Natural killer cell (primary cell): ENCODE measurements at regions of chr2 and their contacts with region 1.

Region 1: DNA sequence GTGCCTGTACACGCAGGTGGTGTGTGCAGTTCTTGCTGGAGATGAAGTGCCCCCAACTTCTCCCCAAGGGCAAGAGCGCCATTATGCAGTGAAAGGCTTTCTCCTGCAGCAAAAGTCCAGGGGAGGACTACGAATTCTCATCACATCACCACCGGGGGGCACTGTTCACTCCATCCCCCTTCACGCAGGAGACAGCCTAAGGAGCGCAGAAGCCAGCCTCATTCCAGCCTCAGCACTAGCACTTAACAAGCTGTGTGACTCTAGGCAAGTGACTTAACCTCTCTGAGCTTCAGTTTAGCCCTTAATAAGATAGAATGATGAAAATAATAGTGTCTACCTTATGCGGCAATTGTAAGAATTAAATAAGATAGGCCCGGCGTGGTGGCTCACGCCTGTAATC is 32.3 kb downstream of the DNMT3A start:
- DNase-seq: peak; percentile 59 to 82
- ATAC-seq: peak in 2 of 3 donors; percentile 20 to 27
- H3K4me3 ChIP-seq: no peak overlapping the region
- H3K4me3 Mint-ChIP-seq: no peak overlapping the region
- H3K27ac ChIP-seq: no peak overlapping the region
- H3K27ac Mint-ChIP-seq: no peak overlapping the region
- H3K4me1 ChIP-seq: peaks cover 64% of the 10 kb centered on the region
- H3K4me1 Mint-ChIP-seq: peaks cover 31 to 52% of the 10 kb centered on the region in 2 donors
- H3K27me3 ChIP-seq: no peaks in the 10 kb centered on the region
- H3K27me3 Mint-ChIP-seq: no peaks in the 10 kb centered on the region
- CTCF ChIP-seq: peak; percentile 47

Region 2: DNA sequence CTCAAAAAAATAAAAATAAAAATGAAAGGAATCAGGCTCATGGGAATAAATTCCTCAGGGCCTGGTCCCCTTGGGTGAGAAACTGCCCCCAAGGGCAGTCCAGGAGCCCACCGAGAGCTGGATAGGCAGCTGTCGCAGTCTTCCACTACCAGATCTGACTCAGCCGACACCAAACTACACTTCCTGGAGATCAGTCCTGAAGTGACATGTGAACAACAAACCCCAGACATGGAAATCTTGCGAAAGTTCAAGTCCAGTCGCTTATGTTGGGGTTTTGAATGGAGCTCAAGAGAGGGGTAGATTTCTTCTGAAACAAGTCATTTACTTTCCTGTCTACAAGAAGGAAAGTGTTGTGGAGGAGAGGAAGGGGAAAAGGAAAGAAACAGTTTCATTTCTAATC is 402.3 kb before region 1 on chr2:
- intact Hi-C with region 1: no loop called
- DNase-seq: no peak
- ATAC-seq: no peak
- H3K4me3 ChIP-seq: no peak overlapping the region
- H3K4me3 Mint-ChIP-seq: no peak overlapping the region
- H3K27ac ChIP-seq: no peak overlapping the region
- H3K27ac Mint-ChIP-seq: no peak overlapping the region
- H3K4me1 ChIP-seq: no peaks in the 10 kb centered on the region
- H3K4me1 Mint-ChIP-seq: no peaks in the 10 kb centered on the region
- H3K27me3 ChIP-seq: no peaks in the 10 kb centered on the region
- H3K27me3 Mint-ChIP-seq: no peaks in the 10 kb centered on the region
- CTCF ChIP-seq: no peak

Region 3: GRCh38 chr2:25204190-25204838 is 105.1 kb before region 1 on chr2:
- intact Hi-C with region 1: no loop called
- DNase-seq: peak; percentile 21 to 27
- ATAC-seq: peak; percentile 36 to 70 (median 66)
- H3K4me3 ChIP-seq: peak overlapping the region; percentile 6
- H3K4me3 Mint-ChIP-seq: peak overlapping the region; percentile 37
- H3K27ac ChIP-seq: no peak overlapping the region
- H3K27ac Mint-ChIP-seq: peak overlapping the region in 1 of 2 donors; percentile 27
- H3K4me1 ChIP-seq: peaks cover 28% of the 10 kb centered on the region
- H3K4me1 Mint-ChIP-seq: peaks cover 3% of the 10 kb centered on the region in 2 donors
- H3K27me3 ChIP-seq: no peaks in the 10 kb centered on the region
- H3K27me3 Mint-ChIP-seq: no peaks in the 10 kb centered on the region
- CTCF ChIP-seq: no peak

Region 4: GRCh38 chr2:25276569-25277465 is 32.6 kb before region 1 on chr2:
- intact Hi-C with region 1: loop called (anchors 5 kb)
- DNase-seq: peak; percentile 83 to 84
- ATAC-seq: peak; percentile 61 to 77 (median 68)
- H3K4me3 ChIP-seq: peak overlapping the region; percentile 42
- H3K4me3 Mint-ChIP-seq: peak overlapping the region; percentile 79
- H3K27ac ChIP-seq: peak overlapping the region; percentile 95
- H3K27ac Mint-ChIP-seq: peak overlapping the region; percentile 88 to 96
- H3K4me1 ChIP-seq: peaks cover 84% of the 10 kb centered on the region
- H3K4me1 Mint-ChIP-seq: peaks cover 44 to 56% of the 10 kb centered on the region in 2 donors
- H3K27me3 ChIP-seq: no peaks in the 10 kb centered on the region
- H3K27me3 Mint-ChIP-seq: no peaks in the 10 kb centered on the region
- CTCF ChIP-seq: peak; percentile 92

Region 5: DNA sequence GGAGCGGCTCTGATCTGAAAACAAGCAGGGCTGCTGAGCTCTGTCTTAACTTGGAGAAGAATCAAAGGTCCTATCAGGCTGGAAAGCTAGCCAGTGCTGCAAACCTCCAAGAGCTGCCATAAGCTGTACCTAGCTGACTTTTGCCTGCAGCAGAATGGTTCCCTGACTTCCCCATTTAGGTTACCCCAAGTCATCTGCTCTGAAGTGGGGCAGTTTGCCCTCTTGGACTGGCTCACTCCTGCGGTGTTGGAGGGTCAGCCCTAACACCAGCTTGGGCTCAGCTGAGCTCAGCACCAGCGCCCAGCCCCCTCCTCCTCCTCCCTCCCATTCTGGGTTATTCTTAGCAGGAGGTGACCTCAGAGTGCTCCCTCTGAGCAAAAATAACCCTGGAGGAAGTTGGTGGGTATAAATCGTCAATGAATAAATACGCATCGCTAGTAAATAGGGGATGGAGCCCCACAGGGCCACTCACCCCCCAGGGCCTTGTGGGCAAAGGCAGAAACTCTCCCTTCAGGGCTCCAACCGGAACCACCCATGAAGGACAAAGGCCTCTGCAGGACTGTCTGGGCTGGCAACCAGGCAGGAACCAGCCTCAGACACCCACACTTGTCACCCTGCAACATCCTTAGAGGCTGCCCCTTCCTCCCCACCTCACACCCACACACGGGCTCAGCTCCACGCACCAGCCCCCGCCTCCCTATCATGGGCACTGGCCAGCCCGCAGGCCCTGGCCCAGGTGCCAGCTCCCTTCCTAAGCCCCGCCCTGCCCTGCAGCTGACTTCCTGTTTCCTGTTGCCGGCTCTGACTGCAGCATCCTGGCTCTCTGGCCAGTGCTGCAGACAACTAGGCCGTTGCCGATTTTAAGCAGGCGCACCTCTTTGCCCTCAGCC is 14.6 kb before region 1 on chr2:
- intact Hi-C with region 1: loop called (anchors 1 kb)
- DNase-seq: peak; percentile 75 to 87
- ATAC-seq: peak; percentile 83 to 93 (median 91)
- H3K4me3 ChIP-seq: peak overlapping the region; percentile 11
- H3K4me3 Mint-ChIP-seq: peak overlapping the region; percentile 84
- H3K27ac ChIP-seq: peak overlapping the region; percentile 82
- H3K27ac Mint-ChIP-seq: peak overlapping the region; percentile 93 to 94
- H3K4me1 ChIP-seq: peaks cover 71% of the 10 kb centered on the region
- H3K4me1 Mint-ChIP-seq: peaks cover 31 to 37% of the 10 kb centered on the region in 2 donors
- H3K27me3 ChIP-seq: no peaks in the 10 kb centered on the region
- H3K27me3 Mint-ChIP-seq: no peaks in the 10 kb centered on the region
- CTCF ChIP-seq: no peak

Region 6: DNA sequence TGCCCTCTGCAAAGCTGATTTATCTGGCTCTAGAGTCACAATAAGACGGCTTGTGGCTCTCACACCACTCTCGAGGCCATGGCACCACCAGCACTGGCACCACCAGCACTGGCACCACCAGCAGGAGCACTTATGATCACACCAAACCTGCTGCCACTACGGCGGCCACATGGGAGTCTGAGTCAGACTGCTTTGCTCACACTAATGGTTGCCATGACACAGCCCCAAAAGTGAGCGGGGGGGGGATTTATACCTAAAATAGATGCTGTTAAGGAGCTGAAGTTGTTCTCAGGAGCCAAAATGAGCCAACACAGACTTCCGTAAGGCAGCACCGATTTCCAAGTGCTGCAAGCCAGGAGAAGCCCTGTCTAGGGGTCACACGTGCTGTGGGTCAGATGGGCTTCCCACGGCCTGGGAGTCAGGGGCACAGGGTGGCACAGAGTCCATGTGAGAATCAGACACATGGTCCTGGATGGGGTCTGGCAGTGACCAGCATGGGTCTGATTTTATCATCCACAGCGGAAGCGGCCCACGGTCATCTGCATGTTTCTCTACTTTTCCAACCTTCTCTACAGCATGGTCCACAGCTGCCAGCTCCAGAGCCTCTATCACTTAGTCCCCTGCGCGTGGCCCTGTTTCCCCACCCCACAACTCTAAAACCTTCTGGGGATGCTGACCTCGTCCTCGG is 15.6 kb after region 1 on chr2:
- intact Hi-C with region 1: no loop called
- DNase-seq: no peak
- ATAC-seq: peak in 1 of 3 donors; percentile 34
- H3K4me3 ChIP-seq: no peak overlapping the region
- H3K4me3 Mint-ChIP-seq: no peak overlapping the region
- H3K27ac ChIP-seq: no peak overlapping the region
- H3K27ac Mint-ChIP-seq: no peak overlapping the region
- H3K4me1 ChIP-seq: peaks cover 32% of the 10 kb centered on the region
- H3K4me1 Mint-ChIP-seq: peaks cover 41 to 42% of the 10 kb centered on the region in 2 donors
- H3K27me3 ChIP-seq: no peaks in the 10 kb centered on the region
- H3K27me3 Mint-ChIP-seq: no peaks in the 10 kb centered on the region
- CTCF ChIP-seq: no peak

Region 7: DNA sequence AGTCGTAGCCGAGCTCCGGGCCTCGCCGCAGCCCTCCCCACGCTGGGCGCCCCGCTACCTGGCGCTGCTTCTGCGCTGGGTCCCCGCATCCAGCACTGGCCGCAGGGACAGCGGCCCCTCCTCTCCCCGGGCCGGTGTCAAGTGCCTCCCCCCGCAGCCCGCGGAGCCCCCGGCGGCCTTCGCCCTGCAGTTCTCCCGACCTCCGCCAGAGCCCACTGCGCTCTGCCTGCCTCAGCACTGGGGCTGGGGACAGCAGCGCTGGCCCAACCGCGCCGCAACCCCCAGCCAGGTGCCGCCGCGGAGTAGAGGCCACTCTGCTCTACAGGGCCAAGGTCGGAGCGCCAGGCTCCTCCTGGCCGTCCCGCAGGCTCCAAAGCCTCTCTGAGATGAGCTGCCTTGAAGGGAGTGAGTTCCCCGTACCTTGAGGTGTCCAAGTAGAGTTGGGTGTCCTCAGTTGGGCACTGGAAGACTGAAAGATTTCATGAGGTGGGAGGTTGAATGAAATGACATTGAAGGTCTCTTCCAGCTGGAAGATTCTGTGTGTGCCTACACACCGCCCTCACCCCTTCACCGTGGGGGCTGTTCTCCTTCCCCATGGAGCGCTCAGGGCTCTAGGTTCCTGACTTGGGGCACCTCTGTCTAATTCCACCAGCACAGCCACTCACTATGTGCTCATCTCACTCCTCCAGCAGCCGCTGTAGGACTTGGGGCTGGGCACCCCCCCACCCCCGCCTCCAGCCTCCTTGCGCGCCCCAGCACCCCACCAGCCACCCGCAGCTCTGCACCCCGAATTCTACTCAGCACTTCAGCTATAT is 33.2 kb after region 1 on chr2:
- intact Hi-C with region 1: loop called (anchors 5 kb)
- DNase-seq: peak; percentile 82 to 90
- ATAC-seq: peak; percentile 93 to 98 (median 94)
- H3K4me3 ChIP-seq: peak overlapping the region; percentile 20
- H3K4me3 Mint-ChIP-seq: peak overlapping the region; percentile 91
- H3K27ac ChIP-seq: no peak overlapping the region
- H3K27ac Mint-ChIP-seq: peak overlapping the region in 1 of 2 donors; percentile 85
- H3K4me1 ChIP-seq: peaks cover 33% of the 10 kb centered on the region
- H3K4me1 Mint-ChIP-seq: peaks cover 8 to 19% of the 10 kb centered on the region in 2 donors
- H3K27me3 ChIP-seq: no peaks in the 10 kb centered on the region
- H3K27me3 Mint-ChIP-seq: no peaks in the 10 kb centered on the region
- CTCF ChIP-seq: peak; percentile 95